PC-9 (cell line): ENCODE measurements at regions of chr3 and their contacts with region 1.

Region 1: DNA sequence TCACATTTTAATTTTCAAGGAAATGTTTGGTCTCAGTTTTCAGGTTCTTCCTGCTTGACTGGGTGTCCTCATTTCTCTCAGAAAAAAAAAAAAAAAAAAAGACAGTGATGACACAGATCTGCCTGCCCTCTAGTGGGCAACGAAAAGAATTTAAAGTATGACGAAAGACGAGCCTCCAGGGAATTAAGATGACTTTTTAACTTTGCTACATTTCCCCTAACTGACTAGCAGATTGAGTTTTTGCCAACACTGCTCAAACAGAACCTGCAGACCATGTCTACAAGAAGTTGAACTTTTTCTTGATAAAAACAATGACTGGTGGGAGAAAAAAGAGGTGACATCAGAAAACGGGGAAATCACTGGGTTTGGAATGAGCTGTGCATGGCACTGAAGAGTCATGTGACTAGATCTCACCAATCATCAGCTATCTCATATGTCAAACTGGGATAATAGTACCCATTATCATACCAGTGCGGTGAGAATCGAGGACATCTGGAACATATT is 40.8 kb downstream of the EOMES start:
- DNase-seq: peak in 1 of 2 experiments; percentile 83
- H3K4me3 ChIP-seq: 0 out of 2 replicates have a peak overlapping the region, but pooled peaks have one; percentile 4
- H3K27ac ChIP-seq: peak overlapping the region; percentile 76
- H3K4me1 ChIP-seq: peaks cover 34% of the 10 kb centered on the region
- H3K27me3 ChIP-seq: no peaks in the 10 kb centered on the region
- CTCF ChIP-seq: peak; percentile 81

Region 2: GRCh38 chr3:27134165-27134796 is 547.0 kb before region 1 on chr3:
- CTCF ChIA-PET with region 1: interaction called, 5 read pairs
- POLR2A ChIA-PET with region 1: no interaction called
- intact Hi-C with region 1: loop called (anchors 10 kb)
- DNase-seq: peak in 1 of 2 experiments; percentile 51
- H3K4me3 ChIP-seq: no peak overlapping the region
- H3K27ac ChIP-seq: no peak overlapping the region
- H3K4me1 ChIP-seq: no peaks in the 10 kb centered on the region
- H3K27me3 ChIP-seq: no peaks in the 10 kb centered on the region
- CTCF ChIP-seq: peak; percentile 89

Region 3: GRCh38 chr3:27357665-27358258 is 323.5 kb before region 1 on chr3:
- CTCF ChIA-PET with region 1: interaction called, 6 read pairs
- POLR2A ChIA-PET with region 1: no interaction called
- intact Hi-C with region 1: loop called (anchors 1 kb)
- DNase-seq: peak; percentile 29 to 37
- H3K4me3 ChIP-seq: no peak overlapping the region
- H3K27ac ChIP-seq: no peak overlapping the region
- H3K4me1 ChIP-seq: peaks cover 28% of the 10 kb centered on the region
- H3K27me3 ChIP-seq: no peaks in the 10 kb centered on the region
- CTCF ChIP-seq: peak; percentile 64

Region 4: GRCh38 chr3:27431116-27431515 is 250.2 kb before region 1 on chr3:
- CTCF ChIA-PET with region 1: interaction called, 11 read pairs
- POLR2A ChIA-PET with region 1: no interaction called
- intact Hi-C with region 1: loop called (anchors 1 kb)
- DNase-seq: peak; percentile 65 to 86
- H3K4me3 ChIP-seq: no peak overlapping the region
- H3K27ac ChIP-seq: peak overlapping the region; percentile 39
- H3K4me1 ChIP-seq: peaks cover 15% of the 10 kb centered on the region; the same call in 1 of the 2 replicates
- H3K27me3 ChIP-seq: no peaks in the 10 kb centered on the region
- CTCF ChIP-seq: no peak

Region 5: GRCh38 chr3:27484015-27484844 is 197.1 kb before region 1 on chr3 and contains the start of gene SLC4A7:
- CTCF ChIA-PET with region 1: interaction called, 9 read pairs
- POLR2A ChIA-PET with region 1: no interaction called
- intact Hi-C with region 1: loop called (anchors 1 kb)
- DNase-seq: peak; percentile 89 to 98
- H3K4me3 ChIP-seq: peak within 1 kb of the TSS; percentile 77
- H3K27ac ChIP-seq: peak within 1 kb of the TSS; percentile 71
- H3K4me1 ChIP-seq: peaks cover 38% of the 10 kb centered on the region
- H3K27me3 ChIP-seq: no peaks in the 10 kb centered on the region
- CTCF ChIP-seq: no peak
- total RNA-seq, gene SLC4A7: 28.1 and 31.7 TPM in 2 replicates

Region 6: DNA sequence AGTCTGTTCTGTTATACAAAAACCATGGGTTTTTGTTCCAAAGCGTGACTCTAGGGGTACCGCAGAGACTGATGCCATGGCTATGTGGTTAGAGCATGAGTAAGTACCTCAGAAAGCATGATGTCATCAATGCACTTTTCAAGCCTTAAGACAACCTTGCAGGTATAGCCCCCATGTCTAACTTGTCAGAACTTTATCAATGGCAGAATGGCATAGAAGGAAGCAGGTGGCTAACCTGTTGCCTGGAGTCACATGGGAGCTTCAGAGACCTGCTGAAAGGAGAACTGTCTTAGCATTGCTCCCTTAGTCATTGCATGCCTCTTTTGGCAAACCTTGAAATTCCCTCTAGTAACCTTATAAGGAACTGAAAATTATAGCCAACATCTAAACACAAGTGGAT is 11.7 kb before region 1 on chr3:
- CTCF ChIA-PET with region 1: no interaction called
- POLR2A ChIA-PET with region 1: no interaction called
- intact Hi-C with region 1: no loop called
- DNase-seq: no peak
- H3K4me3 ChIP-seq: no peak overlapping the region
- H3K27ac ChIP-seq: no peak overlapping the region
- H3K4me1 ChIP-seq: peaks cover under 1% of the 10 kb centered on the region; the same call in 1 of the 2 replicates
- H3K27me3 ChIP-seq: no peaks in the 10 kb centered on the region
- CTCF ChIP-seq: no peak

Region 7: GRCh38 chr3:28268989-28269388 is 587.7 kb after region 1 on chr3:
- CTCF ChIA-PET with region 1: interaction called, 10 read pairs
- POLR2A ChIA-PET with region 1: no interaction called
- intact Hi-C with region 1: no loop called
- DNase-seq: no peak
- H3K4me3 ChIP-seq: no peak overlapping the region
- H3K27ac ChIP-seq: no peak overlapping the region
- H3K4me1 ChIP-seq: no peaks in the 10 kb centered on the region
- H3K27me3 ChIP-seq: no peaks in the 10 kb centered on the region
- CTCF ChIP-seq: no peak; the same call in 1 of the 2 replicates